Activated naive CD4-positive, alpha-beta T cell treated with anti-CD3 and anti-CD28 coated beads for 36 hours (primary cell): ENCODE measurements at regions of chr6 and their contacts with region 1.

Region 1: GRCh38 chr6:111534231-111534751 is 51.3 kb upstream of the REV3L start:
- DNase-seq: no peak
- H3K4me3 Mint-ChIP-seq: no peak overlapping the region
- H3K27ac Mint-ChIP-seq: no peak overlapping the region
- H3K4me1 Mint-ChIP-seq: peaks cover 30% of the 10 kb centered on the region
- H3K27me3 Mint-ChIP-seq: no peaks in the 10 kb centered on the region

Region 2: GRCh38 chr6:111565326-111566221 is 31.3 kb after region 1 on chr6:
- CTCF ChIA-PET with region 1: no interaction called
- intact Hi-C with region 1: loop called (anchors 2 kb)
- DNase-seq: peak; percentile 62
- H3K4me3 Mint-ChIP-seq: no peak overlapping the region
- H3K27ac Mint-ChIP-seq: peak overlapping the region; percentile 64
- H3K4me1 Mint-ChIP-seq: peaks cover 49% of the 10 kb centered on the region
- H3K27me3 Mint-ChIP-seq: no peaks in the 10 kb centered on the region